ENCODE measurements at regions of chr19 and their contacts with region 1.

Region 1: DNA sequence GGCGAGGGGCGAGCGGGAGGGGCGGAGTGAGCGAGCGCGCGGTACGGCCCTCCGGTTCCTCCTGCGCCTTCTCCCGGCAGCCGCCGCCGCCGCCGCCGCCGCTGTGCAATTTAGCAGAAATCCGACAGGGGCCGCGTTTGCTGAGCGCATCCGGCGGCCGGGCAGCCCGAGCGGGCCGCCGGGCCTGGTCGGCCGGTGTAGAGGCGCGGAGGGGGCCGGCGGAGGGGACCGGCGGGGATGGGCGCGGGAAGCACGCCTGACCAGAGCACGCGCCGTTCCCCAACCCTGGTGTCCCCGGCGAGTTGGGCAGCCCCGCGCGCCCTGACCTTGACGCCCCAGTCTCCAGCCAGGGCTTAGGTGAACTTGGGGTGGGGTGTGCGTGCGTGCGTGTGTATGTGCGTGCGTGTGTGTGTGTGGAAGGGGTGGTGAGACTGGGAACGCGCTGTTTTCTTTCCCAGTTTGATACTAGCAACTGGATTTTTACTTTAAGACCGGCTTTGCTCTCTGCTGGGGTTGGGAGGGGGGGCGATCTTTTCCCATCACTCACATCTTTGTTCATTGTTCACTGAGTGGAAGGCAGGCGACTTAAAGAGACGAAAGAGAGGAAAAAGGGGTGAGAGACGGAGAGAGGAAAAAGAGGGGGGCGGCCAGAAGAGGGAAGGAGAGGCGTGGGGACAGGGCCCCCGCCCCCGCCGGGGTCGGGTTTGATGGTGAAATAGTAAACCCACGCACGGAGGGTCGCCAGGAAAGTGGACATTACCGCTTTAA is 144.3 kb upstream of the ZNF536 start:
- DNase-seq: peak; percentile 39
- H3K4me3 ChIP-seq: peak overlapping the region; percentile 45 to 52
- H3K27ac ChIP-seq: peak overlapping the region; percentile 7 to 42
- H3K4me1 ChIP-seq: peaks cover 11% of the 10 kb centered on the region
- H3K27me3 ChIP-seq: peaks cover 13% of the 10 kb centered on the region
- CTCF ChIP-seq: peak; percentile 20 to 64 (median 45)
- POLR2A ChIP-seq: no peak

Region 2: DNA sequence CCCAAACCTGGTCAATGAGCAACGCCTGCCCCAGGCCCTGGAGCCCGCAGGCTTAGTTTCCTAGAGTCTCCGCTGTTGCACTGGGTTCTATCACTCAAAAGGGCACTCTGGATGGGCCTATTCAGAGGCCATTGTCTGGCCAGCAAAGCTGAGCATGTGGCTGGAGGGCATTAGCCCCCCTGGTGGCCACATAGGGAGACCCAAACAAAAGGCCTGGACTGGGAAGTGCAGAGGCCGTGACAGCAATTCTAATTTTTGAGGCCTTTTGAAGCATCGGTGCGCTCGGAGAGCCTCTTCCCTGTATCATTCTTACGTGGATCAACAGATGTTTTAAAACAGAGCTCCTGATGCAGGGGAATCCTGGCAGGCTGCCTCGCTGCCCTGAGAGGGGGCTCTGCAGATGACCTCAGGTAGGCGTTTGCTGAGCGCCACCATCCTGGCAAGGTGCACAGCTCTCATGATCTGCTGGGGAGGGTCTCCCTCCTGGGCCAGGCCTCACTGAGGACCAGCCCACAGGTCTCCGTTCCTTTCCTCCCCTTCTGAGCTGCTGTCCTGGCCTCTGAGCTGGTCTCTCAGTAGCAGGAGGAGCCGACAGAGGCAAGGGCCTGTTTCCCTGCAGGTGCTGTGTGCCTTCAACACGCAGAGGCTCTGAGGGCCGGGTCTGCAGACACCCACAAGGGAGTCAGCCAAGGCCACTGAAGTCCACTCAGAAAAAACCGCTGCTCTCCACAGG is 95.3 kb before region 1 on chr19:
- intact Hi-C with region 1: no loop called
- DNase-seq: no peak
- H3K4me3 ChIP-seq: no peak overlapping the region
- H3K27ac ChIP-seq: no peak overlapping the region
- H3K4me1 ChIP-seq: no peaks in the 10 kb centered on the region
- H3K27me3 ChIP-seq: no peaks in the 10 kb centered on the region
- CTCF ChIP-seq: no peak
- POLR2A ChIP-seq: no peak

Region 3: DNA sequence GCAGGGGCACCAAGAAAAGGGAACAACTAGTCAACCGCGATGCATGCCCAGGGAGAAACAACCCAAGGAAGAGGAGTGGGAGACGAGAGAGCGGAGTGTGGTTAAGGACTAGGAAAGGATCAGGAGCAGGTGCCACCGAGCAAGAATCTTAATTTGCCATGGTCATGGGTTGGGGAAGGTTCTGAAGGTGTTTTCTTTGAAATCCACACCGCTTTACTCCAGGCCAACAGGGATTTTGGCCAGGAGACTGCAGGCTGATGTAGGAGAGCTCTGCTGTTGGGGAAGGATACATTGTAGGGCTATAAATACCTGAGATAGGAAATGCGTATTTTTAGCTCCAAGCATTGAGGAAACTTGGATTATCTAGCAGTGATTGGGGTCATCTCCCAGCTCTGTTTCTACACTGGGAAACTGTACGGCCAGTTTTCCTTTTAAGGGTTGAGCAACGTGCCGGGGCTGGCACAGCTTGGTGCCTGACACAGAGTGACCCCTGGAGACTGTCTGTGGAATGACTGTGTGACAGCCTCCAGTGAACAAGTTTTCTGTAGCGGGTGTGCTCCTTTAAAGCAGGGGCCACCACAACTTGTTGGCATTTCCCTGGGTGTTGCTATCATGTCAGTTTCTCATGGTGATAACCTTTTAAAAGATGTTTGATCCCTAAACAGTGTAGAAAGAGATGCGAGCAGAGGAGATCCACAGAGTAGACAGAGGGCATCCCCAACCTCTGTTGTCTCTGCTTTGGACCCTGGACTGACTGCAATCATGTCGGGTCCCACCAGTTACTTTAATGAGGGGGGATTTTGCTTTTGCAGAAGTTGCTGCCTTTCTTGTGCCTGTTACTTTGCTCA is 178.6 kb after region 1 on chr19:
- intact Hi-C with region 1: loop called (anchors 10 kb)
- DNase-seq: no peak
- H3K4me3 ChIP-seq: no peak overlapping the region
- H3K27ac ChIP-seq: no peak overlapping the region
- H3K4me1 ChIP-seq: no peaks in the 10 kb centered on the region
- H3K27me3 ChIP-seq: no peaks in the 10 kb centered on the region
- CTCF ChIP-seq: peak in 3 of 4 experiments; percentile 7 to 34 (median 22)
- POLR2A ChIP-seq: no peak

Region 4: GRCh38 chr19:30649934-30650614 is 422.2 kb after region 1 on chr19:
- intact Hi-C with region 1: loop called (anchors 2 kb)
- DNase-seq: no peak
- H3K4me3 ChIP-seq: no peak overlapping the region
- H3K27ac ChIP-seq: no peak overlapping the region
- H3K4me1 ChIP-seq: no peaks in the 10 kb centered on the region
- H3K27me3 ChIP-seq: peaks cover 3% of the 10 kb centered on the region
- CTCF ChIP-seq: peak; percentile 50 to 70 (median 63)
- POLR2A ChIP-seq: no peak

Measured in prostate gland (tissue), 2 donors.